A673 (cell line): ENCODE measurements at regions of chr10 and their contacts with region 1.

Region 1: GRCh38 chr10:118818621-118819221 is 64.0 kb upstream of the CACUL1 start:
- DNase-seq: no peak
- H3K4me3 ChIP-seq: no peak overlapping the region
- H3K27ac ChIP-seq: no peak overlapping the region
- H3K4me1 ChIP-seq: no peaks in the 10 kb centered on the region
- H3K27me3 ChIP-seq: peaks cover 4% of the 10 kb centered on the region
- CTCF ChIP-seq: no peak

Region 2: GRCh38 chr10:120793088-120793487 is 1974.4 kb after region 1 on chr10:
- CTCF ChIA-PET with region 1: interaction called, 17 read pairs
- POLR2A ChIA-PET with region 1: no interaction called
- intact Hi-C with region 1: no loop called
- DNase-seq: no peak
- H3K4me3 ChIP-seq: no peak overlapping the region
- H3K27ac ChIP-seq: no peak overlapping the region
- H3K4me1 ChIP-seq: no peaks in the 10 kb centered on the region
- H3K27me3 ChIP-seq: peaks cover 14% of the 10 kb centered on the region
- CTCF ChIP-seq: no peak